Left colon (tissue), 2 donors: ENCODE measurements at regions of chr3 and their contacts with region 1.

Region 1: DNA sequence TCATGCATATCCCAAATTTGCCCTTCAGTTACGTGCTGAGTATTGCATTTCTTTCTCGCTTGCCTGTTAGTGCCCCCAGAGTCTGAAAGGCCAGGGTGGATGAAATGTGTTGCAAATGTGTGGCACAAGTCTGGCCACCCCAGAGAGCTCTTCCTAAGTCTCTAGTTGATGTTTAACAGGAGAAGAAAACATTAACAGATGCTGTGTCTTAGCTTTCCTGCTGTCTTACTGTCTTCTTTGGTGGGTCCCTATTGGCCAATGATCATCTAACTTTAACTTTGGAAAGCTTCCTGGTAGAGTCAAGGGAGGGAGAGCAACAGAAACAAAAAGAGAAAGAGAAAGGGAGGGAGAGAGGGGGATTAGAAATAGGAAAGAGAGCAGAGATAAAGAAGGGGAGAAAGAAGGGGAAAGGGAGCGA is 76.7 kb upstream of the P3H2 start:
- DNase-seq: no peak
- ATAC-seq: peak; percentile 49

Region 2: DNA sequence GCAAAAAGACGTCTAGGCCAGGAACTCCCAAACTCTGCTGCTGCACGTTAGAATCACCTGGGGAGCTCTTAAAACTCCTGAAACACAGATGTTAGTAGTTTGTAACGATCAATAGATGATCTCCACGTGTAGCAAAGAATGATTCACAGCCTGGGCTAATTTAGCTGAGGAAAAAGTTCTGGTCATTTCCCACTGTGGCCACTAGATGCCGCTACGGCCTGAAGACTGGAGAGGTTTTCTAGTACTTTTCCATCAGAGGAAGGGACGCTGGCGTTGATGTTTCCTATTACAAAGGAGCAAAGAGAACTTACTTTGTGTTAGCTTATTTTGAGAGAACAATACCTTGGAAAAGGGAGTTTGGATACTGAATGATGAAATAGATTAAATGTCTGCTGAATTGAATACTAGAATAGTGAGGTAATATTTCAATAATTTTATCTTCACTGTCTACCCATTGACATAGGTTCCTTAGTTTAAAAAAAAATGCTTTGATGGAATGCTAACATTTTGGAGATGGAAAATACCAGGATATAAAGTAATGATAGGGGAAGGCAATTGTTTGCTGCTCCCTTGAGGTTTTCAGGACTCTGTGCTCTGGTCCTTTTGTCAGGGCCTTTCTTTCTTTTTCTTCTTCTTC is 235.7 kb before region 1 on chr3:
- intact Hi-C with region 1: loop called (anchors 5 to 10 kb)
- DNase-seq: peak; percentile 54 to 73
- ATAC-seq: peak; percentile 84